HEK293 (cell line): ENCODE measurements at regions of chr10 and their contacts with region 1.

Region 1: DNA sequence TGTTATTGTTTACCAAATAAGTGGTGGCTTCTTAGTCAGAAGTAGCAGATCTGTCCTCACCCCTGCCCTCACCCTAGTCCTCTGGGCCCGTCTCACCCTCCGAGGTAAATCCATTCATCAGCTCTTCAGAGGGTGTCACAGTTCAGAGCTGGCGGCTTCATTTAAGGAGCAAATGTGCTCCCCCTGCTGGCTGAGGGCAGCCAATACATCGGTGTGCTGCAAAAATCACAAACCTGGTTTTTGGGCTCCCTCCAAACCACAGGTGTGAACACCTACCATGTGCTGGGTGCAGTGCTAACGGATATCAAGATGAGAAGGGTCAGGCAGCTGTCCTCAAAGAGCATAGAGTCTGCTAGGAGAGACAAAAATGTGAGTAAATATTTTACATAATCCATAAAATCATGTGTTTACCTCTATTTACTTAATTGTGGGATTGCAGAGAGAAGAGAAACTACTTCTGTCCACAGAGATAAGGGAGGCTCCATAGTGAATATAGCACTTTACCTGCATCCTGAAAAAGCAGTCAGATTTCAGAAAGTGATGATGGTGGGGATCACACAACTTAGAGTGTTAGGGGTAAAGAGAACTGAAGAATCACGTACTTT is 15.5 kb upstream of the CRTAC1 start:
- H3K4me3 ChIP-seq: no peak overlapping the region
- H3K27ac ChIP-seq: no peak overlapping the region
- H3K4me1 ChIP-seq: no peaks in the 10 kb centered on the region
- CTCF ChIP-seq: 0 out of 2 replicates have a peak, but pooled peaks have one; percentile 47

Region 2: DNA sequence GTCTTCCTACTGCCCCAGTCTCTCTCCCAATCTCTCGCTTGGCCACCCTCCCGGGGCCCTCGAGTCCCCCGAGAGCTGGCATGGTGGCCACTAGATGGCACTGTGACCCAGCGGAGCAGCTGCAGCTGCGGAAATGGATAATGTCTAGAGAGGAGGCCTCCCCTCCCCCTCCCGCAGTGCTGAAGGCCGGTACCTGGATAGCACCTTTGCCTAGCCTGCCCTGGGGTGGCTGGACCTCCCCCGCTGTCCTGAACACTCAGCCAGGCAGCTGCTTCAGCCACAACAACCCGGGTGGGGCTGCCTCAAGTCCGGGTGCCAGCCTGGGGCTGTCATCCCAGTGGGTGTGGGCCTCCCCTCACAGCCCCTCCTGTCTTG is 131.1 kb before region 1 on chr10:
- CTCF ChIA-PET with region 1: interaction called, 137 read pairs
- POLR2A ChIA-PET with region 1: no interaction called
- H3K4me3 ChIP-seq: no peak overlapping the region
- H3K27ac ChIP-seq: no peak overlapping the region
- H3K4me1 ChIP-seq: no peaks in the 10 kb centered on the region
- CTCF ChIP-seq: peak; percentile 91

Region 3: DNA sequence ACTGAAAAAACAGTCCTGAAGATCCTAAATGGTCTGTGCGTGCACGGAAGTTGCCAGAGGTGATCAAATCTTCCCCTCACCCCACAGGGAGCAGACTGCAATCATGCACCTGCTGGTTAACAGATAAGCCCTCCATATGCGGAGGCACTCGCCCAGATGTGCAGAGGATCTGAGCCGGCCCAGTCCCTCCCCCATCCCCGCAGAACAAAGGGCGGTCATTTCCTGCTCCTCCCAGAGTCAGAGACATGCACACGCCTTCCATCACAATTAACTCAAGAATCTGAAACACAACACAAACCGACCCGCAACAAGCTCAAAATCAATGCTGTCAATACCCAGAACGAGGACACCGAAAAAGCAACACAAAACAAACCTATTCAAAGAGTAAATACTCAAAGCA is 39.6 kb before region 1 on chr10:
- CTCF ChIA-PET with region 1: interaction called, 11 read pairs
- POLR2A ChIA-PET with region 1: no interaction called
- H3K4me3 ChIP-seq: no peak overlapping the region
- H3K27ac ChIP-seq: no peak overlapping the region
- H3K4me1 ChIP-seq: peaks cover 3% of the 10 kb centered on the region; the same call in 1 of the 2 replicates
- CTCF ChIP-seq: no peak

Region 4: DNA sequence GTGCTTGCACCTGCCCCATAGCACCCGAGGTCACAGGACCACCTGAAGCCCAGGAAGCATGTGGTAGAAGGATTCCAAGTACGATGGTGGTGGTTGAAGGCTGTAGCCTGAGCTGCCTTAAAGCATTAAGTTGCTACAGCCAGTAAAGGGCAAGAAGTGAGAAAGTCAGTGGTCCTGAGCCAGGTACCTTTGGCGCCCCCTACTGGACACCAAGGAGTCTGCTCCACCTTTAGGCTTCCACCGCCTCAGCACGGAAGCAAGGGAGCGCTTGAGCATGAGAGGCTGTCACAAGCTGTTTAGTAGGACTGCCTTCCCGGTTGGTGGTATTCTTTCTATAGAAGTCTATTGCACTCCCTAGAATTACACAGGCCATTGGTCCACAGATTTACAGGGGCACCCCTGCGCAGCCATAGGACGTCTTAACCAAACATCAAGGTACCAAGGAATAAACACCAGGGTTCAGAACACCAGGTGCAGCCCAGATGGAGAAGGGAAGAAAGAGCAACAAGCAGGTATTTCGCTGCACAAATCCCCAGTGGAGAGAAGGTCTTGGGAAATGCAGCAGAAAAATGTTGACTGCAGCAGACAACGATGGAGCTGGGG is 17.6 kb before region 1 on chr10:
- CTCF ChIA-PET with region 1: interaction called, 92 read pairs
- POLR2A ChIA-PET with region 1: interaction called, 14 read pairs
- H3K4me3 ChIP-seq: no peak overlapping the region
- H3K27ac ChIP-seq: no peak overlapping the region
- H3K4me1 ChIP-seq: no peaks in the 10 kb centered on the region; the same call in 1 of the 2 replicates
- CTCF ChIP-seq: peak; percentile 85

Region 5: GRCh38 chr10:98055875-98056516 is 10.1 kb after region 1 on chr10:
- CTCF ChIA-PET with region 1: interaction called, 50 read pairs
- POLR2A ChIA-PET with region 1: no interaction called
- H3K4me3 ChIP-seq: no peak overlapping the region
- H3K27ac ChIP-seq: no peak overlapping the region
- H3K4me1 ChIP-seq: no peaks in the 10 kb centered on the region
- CTCF ChIP-seq: no peak